ENCODE measurements at regions of chr16 and their contacts with region 1.

Region 1: DNA sequence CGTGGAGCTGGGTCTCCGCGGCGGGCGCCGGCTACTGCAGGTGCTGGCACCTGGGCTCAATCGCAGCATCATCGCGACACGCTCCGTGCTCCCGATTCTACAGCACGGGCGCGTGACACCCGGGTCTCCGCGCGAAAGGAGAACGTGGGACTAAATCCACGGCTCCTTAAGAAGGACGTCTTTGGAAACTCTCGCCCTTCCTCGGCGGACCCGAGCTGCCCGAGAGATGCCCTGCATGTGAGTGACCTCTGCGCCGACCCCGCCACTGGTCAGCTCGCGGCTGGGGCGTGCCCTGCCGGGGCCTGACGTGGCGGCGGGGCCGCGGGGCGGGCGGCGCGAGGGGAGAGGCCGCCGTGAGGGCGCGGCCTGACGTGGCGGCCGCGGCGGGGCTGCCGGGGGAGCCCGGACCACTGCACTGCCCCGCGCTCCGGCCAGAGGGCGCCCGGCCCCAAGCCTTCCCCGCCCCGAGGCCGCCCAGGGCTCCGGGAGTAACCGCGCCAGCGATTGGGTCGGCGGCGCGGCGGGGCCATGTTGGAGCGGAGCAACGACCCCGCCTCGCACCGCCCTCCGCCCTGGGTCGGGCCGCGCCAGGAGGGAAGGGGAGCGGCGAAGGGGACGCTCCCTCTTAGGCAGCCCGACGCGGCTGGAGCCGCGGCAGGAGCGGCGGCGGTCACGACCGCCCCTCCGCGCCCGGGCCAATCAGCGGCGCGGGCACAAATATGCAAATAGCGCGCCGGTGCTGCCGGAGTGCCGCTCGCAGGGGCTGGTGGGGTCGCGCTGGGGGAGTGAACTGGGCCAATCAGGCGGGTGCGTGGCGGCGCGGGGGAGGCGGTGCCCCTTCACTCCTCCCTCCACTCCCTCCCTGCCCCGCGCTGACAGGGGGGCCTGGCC is 75.6 kb downstream of the CHD9 start:
- DNase-seq: peak; percentile 90 to 92 (median 92)
- H3K4me3 ChIP-seq: peak overlapping the region; percentile 82 to 90 (median 89)
- H3K4me3 Mint-ChIP-seq: peak overlapping the region; percentile 87 to 91
- H3K27ac ChIP-seq: peak overlapping the region; percentile 82 to 93
- H3K27ac Mint-ChIP-seq: peak overlapping the region; percentile 71 to 93 (median 89)
- H3K4me1 ChIP-seq: peaks cover 9 to 25% of the 10 kb centered on the region in 2 donors
- H3K4me1 Mint-ChIP-seq: peaks cover 22% of the 10 kb centered on the region
- H3K27me3 ChIP-seq: no peaks in the 10 kb centered on the region
- H3K27me3 Mint-ChIP-seq: no peaks in the 10 kb centered on the region
- CTCF ChIP-seq: peak; percentile 74

Region 2: DNA sequence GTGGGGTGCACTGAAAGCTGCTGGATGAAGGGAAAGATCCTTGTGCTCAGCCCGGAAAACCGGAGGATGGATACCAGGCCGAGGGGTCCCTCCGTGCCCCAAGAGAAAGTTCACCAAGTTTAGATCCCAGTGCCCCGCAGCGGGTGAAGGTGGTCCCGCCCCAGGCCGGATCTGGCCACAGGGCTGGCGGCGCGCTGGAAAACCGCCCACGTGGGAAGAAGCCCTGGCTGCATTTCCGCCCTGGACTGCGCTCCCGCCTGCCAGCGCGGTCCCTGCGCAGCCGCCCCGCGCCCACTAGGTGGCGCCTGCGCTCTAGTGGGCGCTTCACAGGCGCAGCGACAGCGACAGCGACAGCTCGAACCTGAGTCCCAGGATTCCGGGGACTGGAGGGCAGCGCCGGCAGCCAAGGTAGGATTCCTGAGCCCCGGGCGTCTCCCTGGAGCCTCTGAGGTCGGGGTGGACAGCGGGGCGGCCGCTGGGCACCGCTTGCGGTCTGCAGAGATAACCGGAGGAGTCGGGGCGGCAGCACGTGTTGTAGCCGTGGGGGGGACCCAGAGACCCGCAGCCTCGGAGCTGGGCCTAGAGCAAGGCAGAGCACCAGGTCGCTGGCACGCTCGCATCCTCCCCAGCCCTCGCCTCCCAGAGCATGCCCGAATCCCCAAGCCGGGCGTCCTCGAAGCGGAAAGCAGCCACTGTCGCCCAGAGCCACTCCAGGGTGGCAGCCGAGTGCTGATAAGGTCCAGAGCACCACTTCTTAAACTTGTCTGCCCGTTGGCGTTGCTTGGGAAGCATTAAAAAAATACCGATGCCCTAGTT is 75.5 kb before region 1 on chr16 and contains the start of gene CHD9:
- intact Hi-C with region 1: loop called (anchors 2 kb)
- DNase-seq: peak; percentile 77 to 85 (median 79)
- H3K4me3 ChIP-seq: peak within 1 kb of the TSS; percentile 78 to 96 (median 93)
- H3K4me3 Mint-ChIP-seq: peak within 1 kb of the TSS; percentile 83 to 95
- H3K27ac ChIP-seq: peak within 1 kb of the TSS; percentile 35 to 81
- H3K27ac Mint-ChIP-seq: peak within 1 kb of the TSS; percentile 15 to 89 (median 80)
- H3K4me1 ChIP-seq: peaks cover 29 to 37% of the 10 kb centered on the region in 2 donors
- H3K4me1 Mint-ChIP-seq: peaks cover 43% of the 10 kb centered on the region
- H3K27me3 ChIP-seq: no peaks in the 10 kb centered on the region
- H3K27me3 Mint-ChIP-seq: peaks cover 0 to 6% (median 5%) of the 10 kb centered on the region in 3 donors
- CTCF ChIP-seq: peak; percentile 98
- polyA plus RNA-seq, gene CHD9: 15.8 to 26.1 (median 22.5) TPM

Region 3: DNA sequence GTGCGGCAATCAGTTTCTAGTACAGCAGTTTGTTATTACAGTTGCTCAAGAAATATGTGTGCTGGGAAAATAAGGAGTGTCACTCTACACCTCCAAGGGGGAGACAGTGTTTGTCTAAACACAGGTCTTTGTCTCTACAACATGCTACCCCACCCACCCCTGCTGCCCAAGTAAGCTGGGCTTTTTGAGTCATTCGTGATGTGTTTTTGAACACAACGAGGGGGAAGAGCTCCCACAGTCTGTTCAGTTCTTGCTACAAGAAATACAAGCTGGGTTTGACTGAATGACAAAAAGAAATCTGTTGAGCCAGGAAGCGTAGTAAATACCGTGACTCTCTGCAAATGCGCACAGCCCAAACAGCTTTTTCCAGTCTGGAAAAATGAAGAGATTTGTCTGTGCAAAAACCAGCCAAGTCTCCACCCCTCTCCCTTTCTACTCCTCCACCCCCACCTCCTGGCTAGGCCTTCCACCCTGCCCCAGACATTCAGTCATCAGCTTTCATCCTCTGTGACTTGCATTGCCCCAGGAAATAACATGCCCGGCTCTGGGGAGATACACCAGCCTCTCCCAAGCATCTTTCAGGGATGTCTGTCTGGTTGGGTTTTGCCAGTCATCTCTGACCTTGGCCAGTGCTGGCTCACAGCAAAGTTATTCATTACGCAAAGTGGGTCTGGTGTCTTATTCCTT is 49.9 kb before region 1 on chr16:
- intact Hi-C with region 1: no loop called
- DNase-seq: no peak
- H3K4me3 ChIP-seq: no peak overlapping the region
- H3K4me3 Mint-ChIP-seq: no peak overlapping the region
- H3K27ac ChIP-seq: no peak overlapping the region
- H3K27ac Mint-ChIP-seq: peak overlapping the region in 3 of 7 donors; percentile 27 to 43 (median 36)
- H3K4me1 ChIP-seq: peaks cover 3 to 4% of the 10 kb centered on the region in 2 donors
- H3K4me1 Mint-ChIP-seq: peaks cover 5% of the 10 kb centered on the region
- H3K27me3 ChIP-seq: no peaks in the 10 kb centered on the region
- H3K27me3 Mint-ChIP-seq: no peaks in the 10 kb centered on the region
- CTCF ChIP-seq: no peak

Region 4: GRCh38 chr16:53099318-53100130 is 30.9 kb before region 1 on chr16:
- intact Hi-C with region 1: loop called in 1 of 2 experiments (anchors 2 kb)
- DNase-seq: peak; percentile 61 to 76 (median 75)
- H3K4me3 ChIP-seq: peak overlapping the region; percentile 37 to 80 (median 38)
- H3K4me3 Mint-ChIP-seq: peak overlapping the region; percentile 77 to 91
- H3K27ac ChIP-seq: peak overlapping the region; percentile 75 to 95
- H3K27ac Mint-ChIP-seq: peak overlapping the region; percentile 92 to 97 (median 96)
- H3K4me1 ChIP-seq: peaks cover 42 to 43% of the 10 kb centered on the region in 2 donors
- H3K4me1 Mint-ChIP-seq: peaks cover 37% of the 10 kb centered on the region
- H3K27me3 ChIP-seq: no peaks in the 10 kb centered on the region
- H3K27me3 Mint-ChIP-seq: peaks cover 0 to 3% (median 0%) of the 10 kb centered on the region in 3 donors
- CTCF ChIP-seq: no peak

Region 5: GRCh38 chr16:53183442-53183841 is 53.0 kb after region 1 on chr16:
- intact Hi-C with region 1: no loop called
- DNase-seq: no peak
- H3K4me3 ChIP-seq: no peak overlapping the region
- H3K4me3 Mint-ChIP-seq: no peak overlapping the region
- H3K27ac ChIP-seq: no peak overlapping the region
- H3K27ac Mint-ChIP-seq: no peak overlapping the region
- H3K4me1 ChIP-seq: no peaks in the 10 kb centered on the region
- H3K4me1 Mint-ChIP-seq: no peaks in the 10 kb centered on the region
- H3K27me3 ChIP-seq: no peaks in the 10 kb centered on the region
- H3K27me3 Mint-ChIP-seq: no peaks in the 10 kb centered on the region
- CTCF ChIP-seq: no peak

Region 6: DNA sequence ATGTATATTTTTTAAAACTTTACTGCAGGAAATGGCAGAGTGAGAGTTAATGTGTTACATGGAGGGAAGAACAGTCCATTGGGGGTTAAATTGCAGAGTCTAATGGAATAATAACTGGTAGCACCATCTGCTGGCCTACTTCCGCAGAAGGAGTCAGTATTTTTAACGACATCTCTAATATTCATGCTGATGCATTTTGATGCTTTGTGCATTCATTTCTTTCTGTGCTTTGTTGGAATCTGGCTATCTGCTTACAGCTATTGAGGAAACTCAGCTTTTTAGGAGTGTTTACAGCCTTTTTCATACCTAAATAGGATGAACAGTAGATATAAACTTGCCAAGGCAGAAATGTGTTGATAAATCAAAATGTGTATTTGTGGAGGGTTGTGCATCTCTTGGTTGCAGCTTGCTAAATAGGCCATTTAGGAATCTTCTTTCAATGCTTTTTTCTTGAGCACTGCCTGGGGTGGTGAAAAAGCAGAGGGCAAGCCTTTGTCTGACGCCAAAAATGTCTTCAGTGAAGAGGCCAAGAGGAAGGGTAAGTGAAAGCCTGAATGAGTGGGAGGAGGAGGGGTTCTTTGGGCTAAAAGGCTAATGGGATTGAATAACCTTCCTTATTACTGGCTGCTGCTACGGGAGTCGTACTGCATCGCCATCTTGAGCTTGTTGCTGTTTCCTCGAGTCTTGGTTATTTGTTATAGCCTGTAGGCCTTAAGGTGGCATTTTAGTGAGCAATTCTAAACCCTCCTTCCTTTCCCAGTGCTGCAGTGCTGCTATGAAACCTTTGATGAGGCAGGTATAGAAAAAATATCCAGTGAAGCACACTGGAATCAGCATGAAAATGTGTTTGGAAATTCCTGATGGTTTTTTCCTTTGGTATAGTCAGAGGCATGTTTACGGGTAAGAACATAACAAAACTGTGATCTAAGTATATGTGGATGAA is 77.7 kb after region 1 on chr16:
- intact Hi-C with region 1: loop called in 1 of 2 experiments (anchors 5 kb)
- DNase-seq: peak; percentile 75 to 83 (median 78)
- H3K4me3 ChIP-seq: peak overlapping the region; percentile 53 to 97 (median 79)
- H3K4me3 Mint-ChIP-seq: peak overlapping the region; percentile 82 to 90
- H3K27ac ChIP-seq: peak overlapping the region; percentile 64 to 90
- H3K27ac Mint-ChIP-seq: peak overlapping the region; percentile 91 to 96 (median 95)
- H3K4me1 ChIP-seq: peaks cover 17 to 49% of the 10 kb centered on the region in 2 donors
- H3K4me1 Mint-ChIP-seq: peaks cover 23% of the 10 kb centered on the region
- H3K27me3 ChIP-seq: no peaks in the 10 kb centered on the region
- H3K27me3 Mint-ChIP-seq: peaks cover 0 to 2% (median 0%) of the 10 kb centered on the region in 3 donors
- CTCF ChIP-seq: peak; percentile 69

Region 7: DNA sequence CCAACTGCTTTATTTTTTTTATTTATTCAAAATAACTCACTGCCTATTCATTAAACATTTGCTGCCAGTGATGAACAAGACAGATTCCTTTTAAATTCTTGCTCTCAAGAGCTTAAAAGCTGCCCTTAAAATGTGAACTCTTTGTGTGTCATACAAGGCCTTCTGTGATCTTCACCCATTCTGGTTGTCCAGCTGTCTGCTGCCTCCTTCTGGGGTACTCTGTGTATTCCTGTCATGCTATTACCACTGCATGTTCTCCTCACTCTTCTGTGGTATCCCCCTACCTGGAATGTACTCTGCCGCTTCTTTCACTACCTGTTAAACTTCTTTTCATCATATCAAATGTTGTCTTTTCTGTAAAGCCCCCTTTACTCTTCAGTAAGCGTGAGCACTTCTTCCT is 90.2 kb after region 1 on chr16:
- intact Hi-C with region 1: loop called (anchors 5 kb)
- DNase-seq: peak in 2 of 3 donors; percentile 26 to 42
- H3K4me3 ChIP-seq: peak overlapping the region in 1 of 3 experiments; percentile 41
- H3K4me3 Mint-ChIP-seq: no peak overlapping the region
- H3K27ac ChIP-seq: peak overlapping the region; percentile 23 to 83
- H3K27ac Mint-ChIP-seq: no peak overlapping the region
- H3K4me1 ChIP-seq: peaks cover 39 to 59% of the 10 kb centered on the region in 2 donors
- H3K4me1 Mint-ChIP-seq: peaks cover 13% of the 10 kb centered on the region
- H3K27me3 ChIP-seq: no peaks in the 10 kb centered on the region
- H3K27me3 Mint-ChIP-seq: no peaks in the 10 kb centered on the region
- CTCF ChIP-seq: peak; percentile 58

Measured in CD14-positive monocyte (primary cell).